Mammary epithelial cell (primary cell): ENCODE measurements at regions of chr4 and their contacts with region 1.

Region 1: DNA sequence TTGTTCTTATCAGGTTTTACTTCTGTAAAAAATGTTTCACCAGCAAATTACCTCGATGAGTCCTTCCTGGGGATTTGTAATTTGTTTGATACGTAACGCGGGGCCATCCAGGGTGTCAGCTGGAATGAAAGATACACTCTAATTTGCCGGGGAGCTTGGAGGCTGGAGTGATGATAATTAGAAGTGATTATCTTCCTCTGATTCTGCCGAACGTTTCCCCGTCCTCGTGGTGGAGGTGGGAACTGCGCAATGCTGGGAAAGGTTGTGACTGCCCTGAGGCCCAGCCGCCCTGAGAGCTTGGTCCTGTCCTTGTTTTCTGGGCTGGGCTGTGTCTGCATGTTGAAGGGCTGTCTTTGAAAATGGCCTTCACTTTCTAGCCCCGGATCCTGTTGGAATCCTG is 48.0 kb downstream of the SORCS2 start:
- DNase-seq: no peak
- H3K4me3 ChIP-seq: no peak overlapping the region
- H3K27ac ChIP-seq: no peak overlapping the region
- H3K4me1 ChIP-seq: no peaks in the 10 kb centered on the region
- H3K27me3 ChIP-seq: no peaks in the 10 kb centered on the region
- CTCF ChIP-seq: no peak

Region 2: DNA sequence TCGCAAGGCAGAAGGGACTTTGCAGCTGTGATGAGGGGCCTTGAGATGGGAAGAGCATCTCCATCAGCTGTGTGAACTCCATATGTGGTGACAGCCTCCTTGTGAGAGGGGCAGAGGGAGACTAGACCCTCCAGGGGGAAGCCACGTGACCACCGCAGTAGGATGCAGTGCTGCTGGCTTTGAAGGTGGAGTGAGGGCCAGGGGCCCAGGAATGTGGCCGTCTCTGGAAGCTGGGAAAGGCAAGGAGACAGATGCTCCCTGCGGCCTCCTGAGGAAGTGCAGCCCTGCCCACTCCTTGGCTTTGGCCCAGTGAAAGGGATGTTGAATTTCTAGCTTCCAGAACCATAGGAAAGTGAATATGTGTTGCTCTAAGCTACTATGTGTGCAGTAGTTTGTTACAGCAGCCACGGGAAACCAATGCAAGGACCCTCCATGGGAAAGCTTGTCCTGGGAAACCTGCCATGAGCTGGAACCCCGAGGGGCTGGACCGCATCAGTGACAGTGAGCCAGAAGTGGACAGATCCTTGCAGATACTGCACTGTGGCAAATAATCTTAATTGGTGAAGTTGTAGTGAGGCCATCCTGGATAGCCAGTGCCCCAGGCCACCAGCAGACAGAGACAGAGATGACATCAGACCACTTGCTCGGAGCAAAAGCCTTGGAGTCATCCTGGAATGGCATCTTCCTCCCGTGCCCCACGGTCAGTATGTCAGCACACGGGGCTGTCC is 83.4 kb before region 1 on chr4:
- CTCF ChIA-PET with region 1: no interaction called
- dilution Hi-C with region 1: loop called (anchors 5 kb)
- in situ Hi-C with region 1: no loop called
- intact Hi-C with region 1: no loop called
- DNase-seq: no peak
- H3K4me3 ChIP-seq: no peak overlapping the region
- H3K27ac ChIP-seq: no peak overlapping the region
- H3K4me1 ChIP-seq: peaks cover 12% of the 10 kb centered on the region
- H3K27me3 ChIP-seq: no peaks in the 10 kb centered on the region
- CTCF ChIP-seq: peak; percentile 70 to 75

Region 3: DNA sequence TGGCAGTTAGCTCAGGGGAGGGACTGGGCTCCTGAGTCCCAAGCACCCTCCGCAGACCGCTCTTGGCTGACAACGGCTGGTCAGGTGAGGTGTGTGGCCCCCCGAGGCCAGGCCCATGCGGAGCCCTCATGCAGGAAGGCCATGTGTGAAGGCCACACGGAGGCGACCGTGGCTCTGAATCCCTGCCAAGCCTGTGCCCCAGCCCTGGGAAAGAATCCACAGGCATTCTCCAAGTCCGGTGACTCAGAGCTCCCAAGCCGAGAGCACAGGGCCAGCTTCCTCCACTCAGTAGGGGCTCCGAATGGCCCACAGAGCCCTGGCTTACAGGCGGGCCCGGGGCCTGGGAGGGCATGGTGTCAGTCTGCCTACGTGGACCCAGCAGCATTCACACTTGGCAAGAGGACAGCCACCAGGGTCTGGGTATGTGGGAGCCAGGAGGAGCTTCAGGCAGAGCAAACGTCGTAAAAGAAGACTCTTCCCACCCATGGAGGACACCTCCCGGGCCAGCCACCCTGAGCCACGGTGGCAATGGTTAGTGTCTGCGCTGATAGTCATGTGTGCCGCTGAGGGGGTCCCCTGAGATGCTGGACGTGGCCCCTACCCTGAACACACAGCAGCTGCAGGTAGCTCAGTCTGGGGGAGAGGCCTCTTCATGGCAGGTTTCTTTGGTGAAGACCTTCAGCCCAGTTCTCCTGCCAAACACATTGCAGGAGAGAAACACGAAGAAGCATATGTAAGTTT is 88.8 kb after region 1 on chr4:
- CTCF ChIA-PET with region 1: no interaction called
- dilution Hi-C with region 1: loop called (anchors 5 kb)
- in situ Hi-C with region 1: no loop called
- intact Hi-C with region 1: no loop called
- DNase-seq: peak; percentile 35
- H3K4me3 ChIP-seq: no peak overlapping the region
- H3K27ac ChIP-seq: no peak overlapping the region
- H3K4me1 ChIP-seq: peaks cover 8% of the 10 kb centered on the region
- H3K27me3 ChIP-seq: no peaks in the 10 kb centered on the region
- CTCF ChIP-seq: peak in 1 of 2 donors; percentile 23